H1 (cell line): ENCODE measurements at regions of chr15 and their contacts with region 1.

Region 1: GRCh38 chr15:84840741-84841429 is 23.7 kb downstream of the ALPK3 start:
- DNase-seq: no peak
- H3K4me3 ChIP-seq: no peak overlapping the region
- H3K27ac ChIP-seq: no peak overlapping the region
- H3K4me1 ChIP-seq: no peaks in the 10 kb centered on the region
- H3K27me3 ChIP-seq: no peaks in the 10 kb centered on the region
- CTCF ChIP-seq: no peak
- EP300 ChIP-seq: no peak
- POLR2A ChIP-seq: no peak
- RAD21 ChIP-seq: no peak

Region 2: GRCh38 chr15:84871428-84872305 is 30.8 kb after region 1 on chr15:
- CTCF ChIA-PET with region 1: interaction called, 20 read pairs
- POLR2A ChIA-PET with region 1: interaction called, 6 read pairs
- DNase-seq: no peak
- H3K4me3 ChIP-seq: no peak overlapping the region
- H3K27ac ChIP-seq: no peak overlapping the region
- H3K4me1 ChIP-seq: no peaks in the 10 kb centered on the region
- H3K27me3 ChIP-seq: no peaks in the 10 kb centered on the region
- CTCF ChIP-seq: peak; percentile 30 to 40 (median 40)
- EP300 ChIP-seq: no peak
- POLR2A ChIP-seq: no peak
- RAD21 ChIP-seq: peak; percentile 34 to 48

Region 3: DNA sequence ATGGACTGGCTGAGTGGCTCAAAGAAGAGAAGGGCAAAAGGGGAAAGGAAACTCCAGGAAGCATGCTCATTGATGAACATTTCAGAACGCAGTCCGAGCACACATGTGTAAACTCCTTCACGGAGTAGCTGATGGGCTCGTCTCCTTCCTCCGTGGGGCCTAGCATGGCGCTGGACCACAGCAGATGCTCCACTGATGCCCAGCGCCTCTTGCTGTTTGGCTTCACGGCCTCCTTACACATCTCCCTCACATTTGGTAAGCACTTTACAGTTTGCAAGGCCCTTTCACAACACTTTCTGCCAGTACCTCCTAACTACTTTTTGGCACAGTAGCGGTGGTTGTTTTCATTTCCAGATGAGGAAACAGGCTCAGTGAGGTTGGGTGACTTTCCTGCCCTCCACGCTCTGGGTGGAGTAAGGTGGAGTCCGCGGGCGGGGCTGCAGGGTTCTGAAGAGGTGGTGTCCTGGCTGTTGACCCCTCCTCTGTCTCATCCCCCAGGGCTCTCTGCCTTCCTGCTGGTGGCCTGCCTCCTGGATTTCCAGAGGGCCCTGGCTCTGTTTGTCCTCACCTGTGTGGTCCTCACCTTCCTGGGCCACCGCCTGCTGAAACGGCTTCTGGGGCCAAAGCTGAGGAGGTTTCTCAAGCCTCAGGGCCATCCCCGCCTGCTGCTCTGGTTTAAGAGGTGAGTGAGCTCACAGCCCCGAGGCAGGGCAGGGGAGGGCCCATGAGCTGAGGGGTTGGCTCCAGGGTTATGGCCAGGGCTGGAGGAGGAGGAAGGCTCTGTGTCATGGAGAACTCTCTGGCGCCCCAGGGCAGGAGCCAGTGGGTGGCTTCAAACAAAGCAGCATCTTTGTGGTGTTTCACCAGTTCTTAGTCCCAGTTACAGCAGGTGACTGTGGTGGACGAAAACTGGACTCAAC is 53.8 kb after region 1 on chr15:
- CTCF ChIA-PET with region 1: no interaction called
- POLR2A ChIA-PET with region 1: no interaction called
- DNase-seq: no peak
- H3K4me3 ChIP-seq: no peak overlapping the region
- H3K27ac ChIP-seq: no peak overlapping the region
- H3K4me1 ChIP-seq: no peaks in the 10 kb centered on the region; a peak in 2 of 7 replicates
- H3K27me3 ChIP-seq: 0 out of 7 replicates have a peak, but pooled peaks cover 0 to 3% (median 0%) of the 10 kb centered on the region in 4 experiments
- CTCF ChIP-seq: no peak
- EP300 ChIP-seq: no peak
- POLR2A ChIP-seq: no peak
- RAD21 ChIP-seq: no peak

Region 4: GRCh38 chr15:84981711-84982300 is 140.9 kb after region 1 on chr15 and contains the start of gene PDE8A:
- CTCF ChIA-PET with region 1: no interaction called
- POLR2A ChIA-PET with region 1: no interaction called
- DNase-seq: peak in 1 of 2 experiments; percentile 69
- H3K4me3 ChIP-seq: peak within 1 kb of the TSS; percentile 55 to 86 (median 74)
- H3K27ac ChIP-seq: no peak within 1 kb of the TSS
- H3K4me1 ChIP-seq: peaks cover 0 to 5% (median 2%) of the 10 kb centered on the region in 4 experiments; a peak in 4 of 7 replicates
- H3K27me3 ChIP-seq: peaks cover 5 to 43% (median 30%) of the 10 kb centered on the region in 4 experiments
- CTCF ChIP-seq: no peak
- EP300 ChIP-seq: no peak
- POLR2A ChIP-seq: no peak
- RAD21 ChIP-seq: no peak; a peak in 1 of 4 replicates
- total RNA-seq, gene PDE8A: 4.5 and 6.9 TPM in 2 replicates